ENCODE measurements at regions of chr11 and their contacts with region 1.

Region 1: GRCh38 chr11:95231127-95231880 is at the start of gene SESN3:
- DNase-seq: peak; percentile 96 to 100 (median 99)
- ATAC-seq: peak; percentile 92
- H3K4me3 ChIP-seq: peak within 1 kb of the TSS; percentile 82
- H3K4me3 Mint-ChIP-seq: peak within 1 kb of the TSS in 6 of 10 donors; percentile 93 to 98 (median 96)
- H3K27ac ChIP-seq: peak within 1 kb of the TSS; percentile 77
- H3K27ac Mint-ChIP-seq: peak within 1 kb of the TSS; percentile 35 to 97 (median 90)
- H3K4me1 ChIP-seq: peaks cover 16 to 24% of the 10 kb centered on the region in 2 donors
- H3K4me1 Mint-ChIP-seq: peaks cover 37 to 71% (median 50%) of the 10 kb centered on the region in 7 donors
- H3K27me3 ChIP-seq: no peaks in the 10 kb centered on the region
- H3K27me3 Mint-ChIP-seq: peaks cover 0 to 5% (median 0%) of the 10 kb centered on the region in 5 donors
- total RNA-seq, gene SESN3: 77.5 to 262 (median 133) TPM

Region 2: DNA sequence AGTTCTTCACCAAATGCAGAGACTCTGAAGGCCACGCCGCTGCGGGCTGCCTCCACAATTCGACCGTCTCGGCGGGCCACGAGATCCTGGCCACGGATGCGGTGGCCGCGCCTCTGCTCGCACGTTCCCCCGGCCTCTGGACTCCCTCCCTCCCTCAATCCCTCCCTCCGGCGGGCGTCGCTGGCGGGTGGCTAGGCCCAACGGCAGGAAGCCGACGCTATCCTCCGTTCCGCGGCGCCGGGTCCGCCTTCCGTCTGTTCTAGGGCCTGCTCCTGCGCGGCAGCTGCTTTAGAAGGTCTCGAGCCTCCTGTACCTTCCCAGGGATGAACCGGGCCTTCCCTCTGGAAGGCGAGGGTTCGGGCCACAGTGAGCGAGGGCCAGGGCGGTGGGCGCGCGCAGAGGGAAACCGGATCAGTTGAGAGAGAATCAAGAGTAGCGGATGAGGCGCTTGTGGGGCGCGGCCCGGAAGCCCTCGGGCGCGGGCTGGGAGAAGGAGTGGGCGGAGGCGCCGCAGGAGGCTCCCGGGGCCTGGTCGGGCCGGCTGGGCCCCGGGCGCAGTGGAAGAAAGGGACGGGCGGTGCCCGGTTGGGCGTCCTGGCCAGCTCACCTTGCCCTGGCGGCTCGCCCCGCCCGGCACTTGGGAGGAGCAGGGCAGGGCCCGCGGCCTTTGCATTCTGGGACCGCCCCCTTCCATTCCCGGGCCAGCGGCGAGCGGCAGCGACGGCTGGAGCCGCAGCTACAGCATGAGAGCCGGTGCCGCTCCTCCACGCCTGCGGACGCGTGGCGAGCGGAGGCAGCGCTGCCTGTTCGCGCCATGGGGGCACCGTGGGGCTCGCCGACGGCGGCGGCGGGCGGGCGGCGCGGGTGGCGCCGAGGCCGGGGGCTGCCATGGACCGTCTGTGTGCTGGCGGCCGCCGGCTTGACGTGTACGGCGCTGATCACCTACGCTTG is 687.3 kb before region 1 on chr11 and contains the start of gene FUT4:
- CTCF ChIA-PET with region 1: no interaction called
- POLR2A ChIA-PET with region 1: no interaction called
- intact Hi-C with region 1: loop called in 1 of 2 experiments (anchors 5 kb)
- DNase-seq: peak; percentile 51 to 83 (median 70)
- ATAC-seq: peak; percentile 84
- H3K4me3 ChIP-seq: peak within 1 kb of the TSS; percentile 85
- H3K4me3 Mint-ChIP-seq: peak within 1 kb of the TSS; percentile 93 to 100 (median 98)
- H3K27ac ChIP-seq: peak within 1 kb of the TSS; percentile 88
- H3K27ac Mint-ChIP-seq: peak within 1 kb of the TSS; percentile 96 to 100 (median 99)
- H3K4me1 ChIP-seq: peaks cover 22 to 29% of the 10 kb centered on the region in 2 donors
- H3K4me1 Mint-ChIP-seq: peaks cover 24 to 49% (median 41%) of the 10 kb centered on the region in 7 donors
- H3K27me3 ChIP-seq: no peaks in the 10 kb centered on the region
- H3K27me3 Mint-ChIP-seq: no peaks in the 10 kb centered on the region
- total RNA-seq, gene FUT4: 5.6 to 10.2 (median 6.9) TPM

Region 3: GRCh38 chr11:95035316-95035715 is 196.0 kb before region 1 on chr11:
- CTCF ChIA-PET with region 1: no interaction called
- POLR2A ChIA-PET with region 1: no interaction called
- intact Hi-C with region 1: no loop called
- DNase-seq: no peak
- ATAC-seq: no peak
- H3K4me3 ChIP-seq: no peak overlapping the region
- H3K4me3 Mint-ChIP-seq: no peak overlapping the region
- H3K27ac ChIP-seq: no peak overlapping the region
- H3K27ac Mint-ChIP-seq: no peak overlapping the region
- H3K4me1 ChIP-seq: no peaks in the 10 kb centered on the region
- H3K4me1 Mint-ChIP-seq: peaks cover 0 to 3% (median 0%) of the 10 kb centered on the region in 7 donors
- H3K27me3 ChIP-seq: no peaks in the 10 kb centered on the region
- H3K27me3 Mint-ChIP-seq: peaks cover 10 to 41% (median 27%) of the 10 kb centered on the region in 5 donors

Region 4: GRCh38 chr11:95156916-95157541 is 74.3 kb before region 1 on chr11:
- CTCF ChIA-PET with region 1: interaction called, 14 read pairs
- POLR2A ChIA-PET with region 1: interaction called, 73 read pairs
- intact Hi-C with region 1: no loop called
- DNase-seq: no peak
- ATAC-seq: no peak
- H3K4me3 ChIP-seq: no peak overlapping the region
- H3K4me3 Mint-ChIP-seq: peak overlapping the region in 1 of 10 donors; percentile 42
- H3K27ac ChIP-seq: no peak overlapping the region
- H3K27ac Mint-ChIP-seq: peak overlapping the region in 7 of 9 donors; percentile 10 to 84 (median 44)
- H3K4me1 ChIP-seq: peaks cover 17 to 24% of the 10 kb centered on the region in 2 donors
- H3K4me1 Mint-ChIP-seq: peaks cover 26 to 55% (median 48%) of the 10 kb centered on the region in 7 donors
- H3K27me3 ChIP-seq: no peaks in the 10 kb centered on the region
- H3K27me3 Mint-ChIP-seq: no peaks in the 10 kb centered on the region

Region 5: GRCh38 chr11:95254131-95254704 is 22.9 kb after region 1 on chr11:
- CTCF ChIA-PET with region 1: interaction called, 15 read pairs
- POLR2A ChIA-PET with region 1: interaction called, 118 read pairs
- intact Hi-C with region 1: loop called (anchors 1 kb)
- DNase-seq: peak; percentile 45 to 91 (median 84)
- ATAC-seq: peak; percentile 98
- H3K4me3 ChIP-seq: peak overlapping the region; percentile 52
- H3K4me3 Mint-ChIP-seq: peak overlapping the region; percentile 74 to 98 (median 89)
- H3K27ac ChIP-seq: peak overlapping the region; percentile 71
- H3K27ac Mint-ChIP-seq: peak overlapping the region; percentile 81 to 98 (median 90)
- H3K4me1 ChIP-seq: peaks cover 13 to 31% of the 10 kb centered on the region in 2 donors
- H3K4me1 Mint-ChIP-seq: peaks cover 20 to 59% (median 53%) of the 10 kb centered on the region in 7 donors
- H3K27me3 ChIP-seq: no peaks in the 10 kb centered on the region
- H3K27me3 Mint-ChIP-seq: no peaks in the 10 kb centered on the region

Region 6: GRCh38 chr11:95371153-95371552 is 139.8 kb after region 1 on chr11:
- CTCF ChIA-PET with region 1: no interaction called
- POLR2A ChIA-PET with region 1: interaction called, 3 read pairs
- intact Hi-C with region 1: loop called in 1 of 2 experiments (anchors 5 kb)
- DNase-seq: no peak
- ATAC-seq: no peak
- H3K4me3 ChIP-seq: no peak overlapping the region
- H3K4me3 Mint-ChIP-seq: no peak overlapping the region
- H3K27ac ChIP-seq: no peak overlapping the region
- H3K27ac Mint-ChIP-seq: no peak overlapping the region
- H3K4me1 ChIP-seq: no peaks in the 10 kb centered on the region
- H3K4me1 Mint-ChIP-seq: peaks cover 0 to 9% (median 0%) of the 10 kb centered on the region in 7 donors
- H3K27me3 ChIP-seq: no peaks in the 10 kb centered on the region
- H3K27me3 Mint-ChIP-seq: peaks cover 0 to 9% (median 0%) of the 10 kb centered on the region in 5 donors

Region 7: GRCh38 chr11:95680169-95680929 is 449.0 kb after region 1 on chr11:
- CTCF ChIA-PET with region 1: no interaction called
- POLR2A ChIA-PET with region 1: interaction called, 16 read pairs
- intact Hi-C with region 1: no loop called
- DNase-seq: no peak
- ATAC-seq: no peak
- H3K4me3 ChIP-seq: no peak overlapping the region
- H3K4me3 Mint-ChIP-seq: peak overlapping the region; percentile 21 to 78 (median 69)
- H3K27ac ChIP-seq: peak overlapping the region; percentile 60
- H3K27ac Mint-ChIP-seq: peak overlapping the region in 7 of 9 donors; percentile 44 to 87 (median 73)
- H3K4me1 ChIP-seq: peaks cover 0 to 41% of the 10 kb centered on the region in 2 donors
- H3K4me1 Mint-ChIP-seq: peaks cover 27 to 89% (median 71%) of the 10 kb centered on the region in 7 donors
- H3K27me3 ChIP-seq: no peaks in the 10 kb centered on the region
- H3K27me3 Mint-ChIP-seq: no peaks in the 10 kb centered on the region

Region 8: DNA sequence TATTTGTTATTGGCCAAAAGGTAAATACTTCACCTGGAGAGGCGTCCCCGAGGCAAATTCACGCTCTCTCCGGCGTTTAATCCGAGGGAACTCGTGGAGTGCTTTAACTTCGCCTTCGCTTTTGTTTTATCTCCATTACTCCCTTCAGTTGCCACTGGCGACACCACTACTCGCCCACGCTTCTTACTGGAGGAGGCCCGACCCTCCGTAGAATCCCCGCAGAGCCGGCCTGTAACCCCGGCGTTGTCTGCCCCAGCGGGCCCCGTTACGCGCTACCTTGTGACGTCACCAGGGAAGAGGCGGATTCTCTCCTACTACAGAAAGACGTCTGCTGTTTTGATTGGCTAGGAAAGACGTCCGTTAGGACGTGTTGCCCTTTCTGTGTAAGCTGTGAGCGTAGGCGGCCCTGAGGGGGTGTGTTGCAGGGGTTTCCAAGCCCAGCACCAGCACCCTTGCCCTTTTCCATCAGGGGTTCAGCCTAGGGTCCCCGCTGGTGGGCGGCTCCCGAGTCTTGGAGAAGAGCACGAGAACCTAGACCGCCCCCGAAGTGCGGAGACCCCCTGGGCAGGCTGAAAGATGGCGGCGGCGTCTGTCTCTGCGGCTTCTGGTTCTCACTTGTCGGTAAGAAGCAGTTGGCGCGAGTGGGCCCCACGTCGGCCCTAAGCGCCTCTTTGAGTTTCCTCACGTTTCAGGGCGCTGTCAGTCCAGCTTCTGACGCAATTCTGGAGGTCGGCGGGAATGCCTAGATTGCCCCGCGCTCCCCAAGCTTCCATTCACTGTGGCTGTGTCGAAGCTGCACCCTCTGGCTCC is 559.0 kb after region 1 on chr11 and contains the start of gene CEP57:
- CTCF ChIA-PET with region 1: interaction called, 3 read pairs
- POLR2A ChIA-PET with region 1: interaction called, 44 read pairs
- intact Hi-C with region 1: loop called (anchors 1 kb)
- DNase-seq: peak; percentile 80 to 98 (median 96)
- ATAC-seq: peak; percentile 70
- H3K4me3 ChIP-seq: peak within 1 kb of the TSS; percentile 97
- H3K4me3 Mint-ChIP-seq: peak within 1 kb of the TSS; percentile 93 to 100 (median 100)
- H3K27ac ChIP-seq: peak within 1 kb of the TSS; percentile 99
- H3K27ac Mint-ChIP-seq: peak within 1 kb of the TSS; percentile 100
- H3K4me1 ChIP-seq: peaks cover 21 to 22% of the 10 kb centered on the region in 2 donors
- H3K4me1 Mint-ChIP-seq: peaks cover 47 to 74% (median 61%) of the 10 kb centered on the region in 7 donors
- H3K27me3 ChIP-seq: no peaks in the 10 kb centered on the region
- H3K27me3 Mint-ChIP-seq: no peaks in the 10 kb centered on the region
- total RNA-seq, gene CEP57: 47.8 to 72.3 (median 68.9) TPM